OCI-LY7 (cell line): ENCODE measurements at regions of chr11 and their contacts with region 1.

Region 1: GRCh38 chr11:118956094-118956846 is at the start of gene UPK2:
- DNase-seq: peak; percentile 86
- H3K4me3 ChIP-seq: no peak within 1 kb of the TSS
- H3K27ac ChIP-seq: no peak within 1 kb of the TSS
- H3K4me1 ChIP-seq: no peaks in the 10 kb centered on the region
- CTCF ChIP-seq: peak; percentile 94
- total RNA-seq, gene UPK2: 0.28 TPM in 1 of 2 replicates, not detected in the other

Region 2: DNA sequence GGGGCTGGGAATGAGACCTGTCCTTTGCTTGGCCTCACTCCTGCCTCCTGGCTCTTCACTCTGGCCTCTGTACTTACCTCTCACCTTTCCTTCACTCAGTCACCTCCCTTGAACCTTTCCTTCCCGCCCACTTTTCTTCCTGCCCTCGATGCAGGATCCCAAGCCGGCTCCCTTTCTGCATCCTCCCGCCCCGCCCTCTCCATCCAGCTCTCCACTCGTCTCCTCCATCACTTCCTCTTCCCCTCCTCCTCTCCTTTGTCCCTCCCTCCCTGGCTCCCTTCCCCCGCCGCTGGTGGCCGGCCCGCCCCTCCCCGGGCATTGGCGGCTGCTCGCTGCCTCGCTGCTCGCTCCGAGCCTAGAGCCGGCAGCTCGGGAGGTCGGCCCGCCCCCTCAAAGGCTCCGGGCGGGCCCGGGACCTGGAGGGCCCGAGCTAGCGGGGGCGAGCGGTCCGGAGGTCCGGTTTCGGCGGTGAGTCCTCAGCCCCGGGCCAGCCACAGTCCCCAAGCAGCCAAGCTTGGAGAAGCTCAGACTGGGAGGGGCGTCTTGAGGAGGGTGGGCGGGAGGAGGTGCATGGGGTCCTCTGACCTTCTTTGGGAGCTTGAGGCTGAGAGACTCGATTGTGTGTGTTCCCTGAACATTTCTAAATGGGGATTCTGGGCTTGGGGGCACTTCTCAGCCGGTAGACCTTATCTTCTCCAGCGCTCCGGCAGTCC is 335.0 kb before region 1 on chr11:
- CTCF ChIA-PET with region 1: no interaction called
- POLR2A ChIA-PET with region 1: no interaction called
- intact Hi-C with region 1: no loop called
- DNase-seq: no peak
- H3K4me3 ChIP-seq: no peak overlapping the region
- H3K27ac ChIP-seq: no peak overlapping the region
- H3K4me1 ChIP-seq: no peaks in the 10 kb centered on the region
- CTCF ChIP-seq: no peak

Region 3: DNA sequence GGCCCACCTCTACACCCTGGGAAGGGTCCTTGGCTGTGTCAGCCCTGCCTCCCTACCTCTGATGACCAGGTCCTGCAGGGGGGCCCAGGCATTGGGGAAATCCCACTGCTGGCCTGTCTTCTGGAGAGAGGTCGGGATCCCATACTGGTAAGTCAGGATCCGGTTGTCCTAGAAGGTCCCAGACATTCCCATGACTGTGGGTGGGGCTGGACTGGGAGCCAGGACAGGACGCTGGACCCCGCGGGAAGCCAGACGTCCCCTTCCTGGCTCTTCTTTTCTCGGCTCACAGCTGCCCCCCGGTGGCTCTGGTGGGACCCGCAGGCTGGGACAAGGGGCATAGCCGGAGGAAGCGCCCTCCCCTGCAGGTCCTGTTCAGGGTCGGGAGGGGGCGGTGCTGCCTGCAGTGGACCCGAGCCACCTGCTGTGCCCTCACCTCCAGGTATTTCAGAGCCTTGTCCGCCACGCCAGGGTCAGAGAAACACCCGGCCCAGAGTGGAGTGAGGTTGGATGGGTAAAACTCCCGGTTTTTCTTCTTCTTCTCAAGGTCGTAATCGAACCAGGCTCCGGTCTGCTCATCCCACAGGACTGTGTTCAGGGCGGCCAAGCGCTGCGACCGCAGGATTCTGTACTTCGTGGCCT is 296.8 kb before region 1 on chr11:
- CTCF ChIA-PET with region 1: no interaction called
- POLR2A ChIA-PET with region 1: no interaction called
- intact Hi-C with region 1: loop called (anchors 1 kb)
- DNase-seq: peak; percentile 89
- H3K4me3 ChIP-seq: no peak overlapping the region
- H3K27ac ChIP-seq: no peak overlapping the region
- H3K4me1 ChIP-seq: no peaks in the 10 kb centered on the region
- CTCF ChIP-seq: peak; percentile 94

Region 4: GRCh38 chr11:118689851-118690552 is 266.3 kb before region 1 on chr11:
- CTCF ChIA-PET with region 1: no interaction called
- POLR2A ChIA-PET with region 1: no interaction called
- intact Hi-C with region 1: loop called (anchors 1 kb)
- DNase-seq: peak; percentile 91
- H3K4me3 ChIP-seq: peak overlapping the region; percentile 46
- H3K27ac ChIP-seq: no peak overlapping the region
- H3K4me1 ChIP-seq: peaks cover 7% of the 10 kb centered on the region
- CTCF ChIP-seq: peak; percentile 98

Region 5: DNA sequence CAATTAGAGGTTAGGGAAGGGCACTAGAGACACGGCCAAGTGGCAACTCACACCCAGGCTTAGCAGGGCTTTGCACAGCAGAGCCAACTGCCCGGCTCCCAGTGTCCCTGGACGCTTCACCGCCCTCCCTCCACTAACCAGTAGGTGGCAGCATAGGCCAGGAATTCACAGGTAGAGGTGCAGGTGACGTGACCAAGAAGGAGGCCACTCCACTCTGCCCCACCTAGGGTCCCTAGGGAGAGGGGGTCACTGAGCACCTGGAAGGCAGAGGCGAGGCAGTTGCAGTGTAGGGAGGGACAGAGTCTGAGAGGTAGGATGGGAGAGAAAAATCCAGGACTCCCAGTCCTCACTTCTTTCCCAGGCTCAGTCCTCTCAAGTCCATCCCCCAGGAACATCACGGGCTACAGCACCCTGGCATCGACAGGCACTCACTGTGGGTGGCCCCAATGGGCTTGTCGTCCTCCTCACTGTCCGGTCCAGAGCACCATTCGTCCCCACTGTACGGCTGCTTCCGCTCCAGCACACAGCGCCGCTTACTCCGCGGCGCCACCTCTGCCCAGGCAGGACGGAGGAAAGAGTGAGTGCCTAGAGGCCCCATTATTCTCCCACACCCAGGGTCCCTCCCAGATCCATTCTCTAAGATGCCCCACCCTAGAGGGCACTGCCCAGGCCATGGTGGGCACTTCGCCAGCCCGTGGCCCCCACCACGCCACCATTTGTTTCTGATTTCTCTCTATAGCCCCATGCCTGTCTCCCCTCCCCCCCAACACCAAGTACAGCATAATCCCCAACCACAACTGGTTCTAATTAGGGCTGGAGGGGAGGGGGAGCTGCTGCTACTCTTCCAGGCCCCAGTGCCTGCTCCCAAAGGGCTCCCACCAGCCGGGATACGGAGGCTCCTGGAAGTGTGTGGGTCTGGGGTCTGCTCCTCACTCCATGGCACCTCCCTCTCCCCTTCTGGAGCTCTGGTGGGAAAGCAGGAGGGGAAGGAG is 48.9 kb before region 1 on chr11:
- CTCF ChIA-PET with region 1: no interaction called
- POLR2A ChIA-PET with region 1: no interaction called
- intact Hi-C with region 1: loop called (anchors 1 kb)
- DNase-seq: peak; percentile 87
- H3K4me3 ChIP-seq: no peak overlapping the region
- H3K27ac ChIP-seq: no peak overlapping the region
- H3K4me1 ChIP-seq: peaks cover 47% of the 10 kb centered on the region
- CTCF ChIP-seq: peak; percentile 96

Region 6: DNA sequence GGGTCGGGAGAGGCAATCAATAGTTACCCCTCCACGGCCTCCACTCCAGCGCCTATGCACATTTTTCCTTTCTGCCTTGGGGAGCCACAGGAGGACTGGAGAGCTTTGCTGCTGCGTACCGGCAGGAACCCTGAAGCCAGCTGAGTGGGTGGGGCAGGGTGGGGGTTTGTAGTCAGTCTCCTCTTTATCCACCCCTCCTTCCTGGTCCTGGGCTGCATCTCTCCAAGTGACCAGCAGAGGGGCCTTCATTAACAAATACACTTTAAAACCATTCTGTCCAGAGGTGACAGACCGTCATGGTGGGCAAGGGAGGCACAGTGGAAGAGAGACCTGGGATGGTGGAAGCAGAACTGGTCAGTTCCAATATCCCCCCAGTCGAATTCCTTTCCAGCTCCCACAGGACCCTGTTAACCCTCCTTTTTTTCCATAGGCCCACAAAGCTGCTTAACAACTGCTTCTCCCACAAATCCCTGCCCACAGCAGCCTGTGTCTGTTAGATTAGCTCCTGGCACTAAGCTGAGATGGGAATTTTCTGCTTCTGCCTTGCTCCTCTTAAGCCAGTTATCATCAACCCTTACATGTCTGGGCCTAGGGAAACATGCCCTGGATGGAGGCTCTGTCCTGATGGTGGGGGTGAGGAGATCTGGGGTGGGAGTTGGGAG is 188.7 kb after region 1 on chr11:
- CTCF ChIA-PET with region 1: no interaction called
- POLR2A ChIA-PET with region 1: no interaction called
- intact Hi-C with region 1: no loop called
- DNase-seq: peak; percentile 67
- H3K4me3 ChIP-seq: no peak overlapping the region
- H3K27ac ChIP-seq: no peak overlapping the region
- H3K4me1 ChIP-seq: peaks cover 17% of the 10 kb centered on the region
- CTCF ChIP-seq: peak; percentile 55